ENCODE measurements at regions of chr3 and their contacts with region 1.

Region 1: DNA sequence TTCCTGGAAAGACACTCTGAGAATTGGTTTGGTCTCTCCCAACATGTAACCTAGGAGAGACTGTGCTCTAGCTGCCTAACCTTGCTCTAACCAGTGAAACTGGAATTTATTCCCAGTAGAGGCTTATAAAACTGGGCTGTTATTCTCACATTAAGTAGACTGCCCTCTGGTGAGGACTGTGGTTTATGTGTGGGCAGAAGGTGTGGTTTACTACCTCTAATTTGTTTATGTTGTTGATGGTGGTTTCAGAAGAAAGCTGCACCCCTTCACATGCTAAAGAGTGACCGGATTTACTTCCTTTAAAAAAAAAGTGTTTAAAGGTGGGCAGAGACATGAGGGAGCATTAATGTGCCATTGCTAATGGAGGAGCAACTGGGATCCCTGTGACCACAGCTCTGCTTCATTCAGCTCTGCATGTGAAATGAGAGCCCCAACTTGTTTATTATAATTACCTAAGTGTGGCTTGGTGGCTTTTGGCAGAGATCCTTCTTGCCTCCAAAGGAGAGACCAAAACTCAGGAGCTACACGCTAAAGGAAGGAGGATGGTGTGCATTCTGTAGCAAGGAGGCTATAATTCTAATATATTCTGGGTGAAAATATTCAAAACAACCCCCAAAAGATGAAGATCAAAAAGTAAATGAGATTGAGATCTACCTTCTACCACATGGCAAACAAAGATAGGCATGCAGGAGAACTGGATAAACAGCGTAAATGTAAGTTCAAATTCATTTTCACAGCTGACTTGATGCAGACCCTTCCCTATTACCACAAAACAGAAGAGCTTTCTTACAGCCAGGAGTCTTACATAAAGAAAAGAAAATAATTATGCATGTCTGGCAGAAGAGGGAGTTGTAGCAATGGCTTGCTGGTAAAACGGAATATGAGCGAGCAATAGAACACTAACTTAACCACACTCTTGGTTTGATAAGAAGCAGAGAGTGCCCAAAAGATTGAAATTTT is 273.0 kb downstream of the MECOM start:
- DNase-seq: peak; percentile 66
- H3K4me3 Mint-ChIP-seq: peak overlapping the region; percentile 41
- H3K27ac Mint-ChIP-seq: peak overlapping the region; percentile 94
- H3K4me1 Mint-ChIP-seq: peaks cover 47% of the 10 kb centered on the region
- H3K27me3 Mint-ChIP-seq: no peaks in the 10 kb centered on the region
- CTCF ChIP-seq: peak; percentile 50

Region 2: GRCh38 chr3:169149349-169149890 is 241.1 kb before region 1 on chr3:
- CTCF ChIA-PET with region 1: interaction called, 84 read pairs
- intact Hi-C with region 1: loop called (anchors 1 kb)
- DNase-seq: peak; percentile 97
- H3K4me3 Mint-ChIP-seq: peak overlapping the region; percentile 97
- H3K27ac Mint-ChIP-seq: peak overlapping the region; percentile 99
- H3K4me1 Mint-ChIP-seq: peaks cover 20% of the 10 kb centered on the region
- H3K27me3 Mint-ChIP-seq: no peaks in the 10 kb centered on the region
- CTCF ChIP-seq: peak; percentile 98

Region 3: GRCh38 chr3:169295126-169295525 is 95.4 kb before region 1 on chr3:
- CTCF ChIA-PET with region 1: interaction called, 8 read pairs
- intact Hi-C with region 1: loop called (anchors 2 kb)
- DNase-seq: peak; percentile 51
- H3K4me3 Mint-ChIP-seq: no peak overlapping the region
- H3K27ac Mint-ChIP-seq: peak overlapping the region; percentile 84
- H3K4me1 Mint-ChIP-seq: peaks cover 72% of the 10 kb centered on the region
- H3K27me3 Mint-ChIP-seq: no peaks in the 10 kb centered on the region
- CTCF ChIP-seq: peak; percentile 72

Region 4: GRCh38 chr3:169379496-169380090 is 11.0 kb before region 1 on chr3:
- CTCF ChIA-PET with region 1: interaction called, 27 read pairs
- intact Hi-C with region 1: no loop called
- DNase-seq: no peak
- H3K4me3 Mint-ChIP-seq: peak overlapping the region; percentile 34
- H3K27ac Mint-ChIP-seq: peak overlapping the region; percentile 63
- H3K4me1 Mint-ChIP-seq: peaks cover 57% of the 10 kb centered on the region
- H3K27me3 Mint-ChIP-seq: no peaks in the 10 kb centered on the region
- CTCF ChIP-seq: no peak

Region 5: DNA sequence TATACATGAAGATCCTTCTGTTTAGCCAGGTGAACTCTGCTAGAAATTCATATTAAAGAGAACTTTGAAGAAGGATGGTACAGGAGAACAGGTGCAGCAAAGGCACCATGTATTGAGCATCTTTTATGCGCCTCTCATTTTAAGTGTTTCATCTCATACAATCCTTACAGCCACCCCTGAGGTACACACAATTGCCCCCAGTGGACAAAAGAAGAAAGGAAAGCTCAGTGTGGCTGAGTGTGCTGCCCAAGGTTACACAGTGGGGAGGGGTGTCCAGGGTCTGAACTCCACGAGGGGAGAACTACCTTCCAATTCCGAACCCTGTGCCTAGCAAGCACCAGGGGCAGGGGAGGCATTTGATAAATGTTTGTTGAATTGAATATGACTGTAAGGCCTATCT is 174.3 kb after region 1 on chr3:
- CTCF ChIA-PET with region 1: interaction called, 3 read pairs
- intact Hi-C with region 1: loop called (anchors 5 kb)
- DNase-seq: peak; percentile 16
- H3K4me3 Mint-ChIP-seq: no peak overlapping the region
- H3K27ac Mint-ChIP-seq: no peak overlapping the region
- H3K4me1 Mint-ChIP-seq: peaks cover 25% of the 10 kb centered on the region
- H3K27me3 Mint-ChIP-seq: no peaks in the 10 kb centered on the region
- CTCF ChIP-seq: peak; percentile 65

Region 6: GRCh38 chr3:169744366-169745054 is 354.0 kb after region 1 on chr3:
- CTCF ChIA-PET with region 1: no interaction called
- intact Hi-C with region 1: loop called (anchors 5 kb)
- DNase-seq: no peak
- H3K4me3 Mint-ChIP-seq: no peak overlapping the region
- H3K27ac Mint-ChIP-seq: no peak overlapping the region
- H3K4me1 Mint-ChIP-seq: peaks cover 12% of the 10 kb centered on the region
- H3K27me3 Mint-ChIP-seq: peaks cover 14% of the 10 kb centered on the region
- CTCF ChIP-seq: peak; percentile 42

Measured in Calu3 (cell line).